ENCODE measurements at regions of chr1 and their contacts with region 1.

Region 1: GRCh38 chr1:225923692-225924555 is at the start of gene PYCR2:
- DNase-seq: peak; percentile 89 to 95 (median 94)
- ATAC-seq: peak; percentile 95 to 96
- H3K4me3 Mint-ChIP-seq: peak within 1 kb of the TSS; percentile 92 to 98 (median 96)
- H3K27ac Mint-ChIP-seq: peak within 1 kb of the TSS; percentile 91 to 98 (median 96)
- H3K4me1 Mint-ChIP-seq: peaks cover 31 to 72% (median 66%) of the 10 kb centered on the region in 4 donors
- H3K27me3 Mint-ChIP-seq: no peaks in the 10 kb centered on the region
- polyA plus RNA-seq, gene PYCR2: 75.0 to 152 (median 121) TPM

Region 2: DNA sequence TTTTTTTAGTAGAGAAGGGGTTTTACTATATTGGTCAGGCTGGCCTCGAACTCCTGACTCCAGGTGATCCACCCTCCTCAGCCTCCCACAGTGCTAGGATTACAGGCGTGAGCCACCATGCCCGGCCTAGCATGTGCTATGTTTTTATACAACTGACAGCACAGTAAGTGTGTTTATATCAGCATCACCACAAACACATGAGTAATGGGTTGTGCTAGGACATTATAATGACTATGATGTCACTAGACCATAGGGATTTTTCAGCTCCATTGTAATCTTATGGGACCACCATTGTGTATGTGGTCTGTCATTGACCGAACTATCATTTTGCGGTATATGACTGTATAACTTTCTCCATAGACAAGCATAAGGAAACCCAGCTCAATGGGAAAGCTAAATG is 10.8 kb after region 1 on chr1:
- POLR2A ChIA-PET with region 1: interaction called, 10 read pairs
- DNase-seq: no peak
- ATAC-seq: no peak
- H3K4me3 Mint-ChIP-seq: no peak overlapping the region
- H3K27ac Mint-ChIP-seq: no peak overlapping the region
- H3K4me1 Mint-ChIP-seq: peaks cover 5 to 11% (median 6%) of the 10 kb centered on the region in 4 donors
- H3K27me3 Mint-ChIP-seq: no peaks in the 10 kb centered on the region

Region 3: DNA sequence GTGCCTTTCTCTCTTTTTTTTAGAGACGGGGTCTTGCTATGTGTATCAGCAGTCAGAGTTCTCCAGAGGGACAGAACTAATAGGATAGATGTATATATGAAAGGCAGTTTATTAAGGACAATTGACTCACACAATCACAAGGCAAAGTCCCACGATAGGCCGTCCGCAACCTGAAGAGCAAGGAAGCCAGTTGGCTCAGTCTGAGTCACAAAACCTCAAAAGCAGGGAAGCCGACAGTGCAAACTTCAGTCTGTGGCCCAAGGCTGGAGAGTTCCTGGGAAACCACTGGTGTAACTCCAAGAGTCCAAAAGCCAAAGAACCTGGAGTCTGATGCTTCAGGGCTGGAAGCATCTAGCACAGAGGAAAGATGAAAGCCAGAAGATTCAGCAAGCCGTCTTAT is 122.3 kb after region 1 on chr1:
- POLR2A ChIA-PET with region 1: no interaction called
- DNase-seq: no peak
- ATAC-seq: no peak
- H3K4me3 Mint-ChIP-seq: no peak overlapping the region
- H3K27ac Mint-ChIP-seq: peak overlapping the region in 2 of 10 donors; percentile 21 to 23
- H3K4me1 Mint-ChIP-seq: peaks cover 0 to 4% (median under 1%) of the 10 kb centered on the region in 4 donors
- H3K27me3 Mint-ChIP-seq: no peaks in the 10 kb centered on the region

Measured in naive thymus-derived CD8-positive, alpha-beta T cell (primary cell).